ENCODE measurements at regions of chr1 and their contacts with region 1.

Region 1: GRCh38 chr1:154501423-154502065 is 475 bp upstream of the TDRD10 start:
- DNase-seq: no peak
- H3K4me3 ChIP-seq: peak overlapping the region; percentile 57 to 67 (median 58)
- H3K27ac ChIP-seq: peak overlapping the region; percentile 50 to 79 (median 75)
- H3K4me1 ChIP-seq: peaks cover 14 to 22% (median 20%) of the 10 kb centered on the region in 4 donors
- H3K27me3 ChIP-seq: peaks cover 5 to 80% (median 40%) of the 10 kb centered on the region in 4 donors
- CTCF ChIP-seq: no peak
- EP300 ChIP-seq: no peak
- POLR2A ChIP-seq: no peak

Region 2: DNA sequence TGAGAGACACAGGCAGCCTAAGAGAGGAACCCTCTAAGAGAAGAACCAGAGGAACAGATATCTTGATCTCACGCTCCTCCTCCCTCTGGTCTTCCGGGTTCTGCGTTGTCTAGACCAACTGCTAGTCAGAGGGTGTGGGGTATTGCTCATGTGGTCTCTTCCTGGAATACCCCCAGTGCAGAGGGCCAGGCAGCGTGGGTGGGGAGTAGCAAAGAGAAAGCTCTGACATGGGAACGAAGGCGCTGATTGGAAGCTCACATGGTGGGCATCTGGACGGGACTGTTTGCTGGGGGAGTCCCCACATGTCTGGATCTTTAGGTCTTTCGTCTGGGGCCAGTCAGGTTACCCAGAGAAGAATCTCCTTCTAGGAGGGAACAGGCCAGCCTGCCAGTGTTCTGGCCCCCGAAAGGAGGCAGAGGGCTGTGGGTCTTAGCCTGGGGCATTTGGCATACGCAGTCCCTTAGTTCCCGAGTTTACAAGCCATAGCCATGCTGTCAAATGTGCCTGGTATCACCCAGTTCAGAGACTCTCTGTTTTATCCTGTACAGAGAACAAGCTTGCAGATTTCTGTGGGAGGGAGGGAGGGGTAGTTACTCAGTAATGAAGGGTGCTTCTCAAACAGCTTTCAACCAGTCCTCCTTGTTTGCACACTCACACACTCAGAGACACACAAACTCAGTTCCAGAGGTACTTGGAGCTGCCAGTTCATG is 114.7 kb before region 1 on chr1:
- intact Hi-C with region 1: no loop called
- DNase-seq: no peak
- H3K4me3 ChIP-seq: no peak overlapping the region
- H3K27ac ChIP-seq: no peak overlapping the region
- H3K4me1 ChIP-seq: peaks cover 0 to 4% (median 0%) of the 10 kb centered on the region in 4 donors
- H3K27me3 ChIP-seq: no peaks in the 10 kb centered on the region
- CTCF ChIP-seq: no peak
- EP300 ChIP-seq: no peak
- POLR2A ChIP-seq: no peak

Region 3: GRCh38 chr1:154529304-154529703 is 27.8 kb after region 1 on chr1:
- intact Hi-C with region 1: loop called (anchors 2 kb)
- DNase-seq: no peak
- H3K4me3 ChIP-seq: no peak overlapping the region
- H3K27ac ChIP-seq: no peak overlapping the region
- H3K4me1 ChIP-seq: no peaks in the 10 kb centered on the region
- H3K27me3 ChIP-seq: no peaks in the 10 kb centered on the region
- CTCF ChIP-seq: no peak
- EP300 ChIP-seq: no peak
- POLR2A ChIP-seq: no peak

Measured in esophagus muscularis mucosa (tissue), 4 donors.